Right ventricle myocardium superior (tissue), 1 donor: ENCODE measurements at regions of chr10 and their contacts with region 1.

Region 1: DNA sequence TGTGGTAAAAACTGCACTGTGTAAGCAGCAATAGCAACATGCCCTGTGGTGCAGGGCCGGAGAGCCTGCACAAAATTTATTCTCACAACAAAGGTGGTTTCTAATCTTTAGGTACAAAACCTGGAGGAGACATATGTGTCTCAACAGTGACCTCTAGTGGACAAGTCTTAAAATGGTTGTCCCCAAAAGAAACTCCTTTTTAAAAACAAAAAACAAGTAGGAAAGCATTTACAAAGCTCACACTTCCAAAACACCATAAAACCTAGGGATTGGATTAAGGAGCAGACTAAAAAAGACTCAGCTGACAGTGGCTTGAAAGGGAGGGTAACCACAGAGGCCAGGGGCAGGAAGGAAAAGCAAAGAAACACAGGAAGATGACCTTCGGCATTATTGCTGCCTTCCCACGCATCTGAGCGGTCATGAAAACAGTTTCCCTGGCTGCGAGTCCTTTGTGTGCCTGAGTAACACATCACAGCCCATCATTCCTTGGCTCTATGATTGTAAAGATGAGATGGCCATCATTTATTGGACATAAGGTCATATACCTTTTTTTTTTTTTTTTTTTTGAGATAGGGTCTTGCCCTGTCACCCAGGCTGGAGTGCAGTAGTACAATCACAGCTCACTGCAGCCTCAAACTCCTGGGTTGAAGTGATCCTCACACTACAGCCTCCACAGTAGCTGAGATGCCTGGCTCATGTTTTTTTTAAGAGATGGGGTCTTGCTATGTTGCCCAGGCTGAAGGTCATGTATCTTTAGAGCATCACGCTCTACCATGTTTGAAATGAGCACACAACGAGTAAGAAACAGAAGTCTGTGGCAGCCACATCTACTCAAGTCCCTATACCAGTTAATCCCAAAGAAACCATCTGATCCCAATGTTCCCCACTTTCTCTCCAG is 39.5 kb downstream of the RSU1 start:
- DNase-seq: no peak
- ATAC-seq: peak; percentile 61

Region 2: DNA sequence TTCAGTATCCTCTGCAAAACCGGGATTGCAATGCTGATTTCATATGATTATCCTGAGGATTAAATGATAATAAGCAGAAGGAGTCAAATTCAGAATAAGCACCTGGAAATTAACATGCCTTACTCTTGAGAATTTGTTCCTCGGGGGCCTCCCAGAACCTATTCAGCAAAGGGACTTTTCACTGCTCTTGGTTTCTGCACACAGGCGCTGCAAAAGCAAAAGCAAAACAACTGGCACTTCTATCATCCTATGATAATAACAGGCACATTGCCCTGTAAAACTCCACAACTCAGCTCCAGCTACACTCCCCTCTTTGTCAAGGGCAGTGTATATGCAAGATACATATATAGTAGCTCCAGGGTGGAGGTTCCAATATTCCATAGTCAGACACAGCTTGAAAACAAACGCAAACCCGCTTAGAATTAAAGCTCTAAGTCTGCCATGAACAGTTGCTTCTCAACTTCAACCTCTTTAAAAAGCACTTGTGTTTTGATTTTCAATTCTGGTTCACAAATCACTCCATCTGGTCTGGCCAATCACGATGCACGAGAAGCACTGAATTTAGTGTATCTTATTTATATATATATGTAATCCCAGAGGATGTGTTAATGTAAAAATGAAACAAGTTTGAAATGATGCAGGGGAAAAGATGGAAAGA is 460.9 kb before region 1 on chr10:
- intact Hi-C with region 1: loop called (anchors 10 kb)
- DNase-seq: no peak
- ATAC-seq: no peak

Region 3: GRCh38 chr10:16436758-16437539 is 340.8 kb before region 1 on chr10 and contains the start of gene PTER:
- intact Hi-C with region 1: loop called (anchors 10 kb)
- DNase-seq: peak; percentile 99
- ATAC-seq: peak; percentile 99
- total RNA-seq, gene PTER: 22.3 TPM

Region 4: GRCh38 chr10:16663444-16663843 is 114.3 kb before region 1 on chr10:
- intact Hi-C with region 1: no loop called
- DNase-seq: peak; percentile 50
- ATAC-seq: peak; percentile 98